Caco-2 (cell line): ENCODE measurements at regions of chr4 and their contacts with region 1.

Region 1: DNA sequence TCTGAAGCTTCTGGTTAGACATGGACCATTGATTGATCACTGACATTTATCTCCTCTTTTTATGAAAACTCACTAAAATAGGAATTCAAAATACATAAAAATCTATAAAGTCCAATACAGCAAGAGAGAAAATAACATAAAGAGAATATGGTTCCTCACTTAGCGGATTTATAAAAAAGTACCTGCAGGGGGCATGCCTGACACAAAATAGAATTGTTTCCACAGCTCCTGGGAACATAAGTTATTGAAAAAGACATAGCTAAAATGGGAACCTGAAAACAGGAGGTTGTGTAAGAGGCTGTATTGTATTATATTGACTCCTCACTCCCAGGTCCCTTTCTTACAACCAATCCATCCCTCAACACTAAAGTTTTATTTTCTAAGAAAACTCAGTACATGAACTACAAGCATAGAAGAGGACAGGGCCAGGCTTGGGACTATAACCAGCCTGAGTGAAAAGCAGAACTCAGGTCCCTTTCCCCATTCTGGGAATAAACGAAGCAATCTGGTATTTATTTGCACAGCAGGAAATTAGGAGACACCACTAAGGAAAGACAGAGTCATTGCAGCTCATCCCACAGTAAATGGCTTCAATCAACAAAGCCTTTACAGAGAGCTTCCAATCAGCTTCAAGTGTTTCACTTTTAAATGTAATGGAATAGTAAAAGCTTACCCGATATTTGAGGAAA is 121.1 kb upstream of the NDST4 start:
- DNase-seq: peak in 1 of 2 experiments; percentile 6
- H3K4me3 ChIP-seq: no peak overlapping the region
- H3K4me3 Mint-ChIP-seq: no peak overlapping the region
- H3K27ac Mint-ChIP-seq: no peak overlapping the region
- H3K4me1 ChIP-seq: no peaks in the 10 kb centered on the region
- H3K4me1 Mint-ChIP-seq: no peaks in the 10 kb centered on the region
- H3K27me3 ChIP-seq: no peaks in the 10 kb centered on the region
- H3K27me3 Mint-ChIP-seq: no peaks in the 10 kb centered on the region
- CTCF ChIP-seq: peak; percentile 28 to 29

Region 2: DNA sequence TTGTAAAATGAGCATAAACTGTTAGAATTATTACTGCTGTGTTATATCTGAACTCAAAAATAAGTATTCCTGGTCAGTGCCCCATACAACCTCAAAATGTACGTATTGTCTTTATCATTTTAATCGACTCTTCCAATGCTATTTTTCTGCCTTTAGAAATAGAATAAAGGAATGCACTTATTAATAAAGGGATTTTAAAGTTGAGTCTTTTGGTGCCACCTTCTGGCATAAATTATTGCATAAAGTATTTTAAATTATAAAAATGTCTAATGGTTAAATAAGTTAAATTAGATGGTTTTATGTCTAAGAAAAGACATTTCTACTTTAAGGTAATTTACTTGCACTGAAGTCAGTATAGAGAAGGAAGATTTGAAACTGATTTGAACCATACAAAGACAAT is 302.8 kb after region 1 on chr4:
- CTCF ChIA-PET with region 1: interaction called, 5 read pairs
- POLR2A ChIA-PET with region 1: no interaction called
- intact Hi-C with region 1: loop called (anchors 1 kb)
- DNase-seq: no peak
- H3K4me3 ChIP-seq: no peak overlapping the region
- H3K4me3 Mint-ChIP-seq: no peak overlapping the region
- H3K27ac Mint-ChIP-seq: no peak overlapping the region
- H3K4me1 ChIP-seq: no peaks in the 10 kb centered on the region
- H3K4me1 Mint-ChIP-seq: no peaks in the 10 kb centered on the region
- H3K27me3 ChIP-seq: no peaks in the 10 kb centered on the region
- H3K27me3 Mint-ChIP-seq: no peaks in the 10 kb centered on the region
- CTCF ChIP-seq: no peak

Region 3: GRCh38 chr4:115790812-115791211 is 556.3 kb after region 1 on chr4:
- CTCF ChIA-PET with region 1: no interaction called
- POLR2A ChIA-PET with region 1: no interaction called
- intact Hi-C with region 1: loop called (anchors 1 kb)
- DNase-seq: no peak
- H3K4me3 ChIP-seq: no peak overlapping the region
- H3K4me3 Mint-ChIP-seq: no peak overlapping the region
- H3K27ac Mint-ChIP-seq: no peak overlapping the region
- H3K4me1 ChIP-seq: no peaks in the 10 kb centered on the region
- H3K4me1 Mint-ChIP-seq: no peaks in the 10 kb centered on the region
- H3K27me3 ChIP-seq: no peaks in the 10 kb centered on the region
- H3K27me3 Mint-ChIP-seq: no peaks in the 10 kb centered on the region
- CTCF ChIP-seq: peak in 1 of 2 experiments; percentile 14

Region 4: DNA sequence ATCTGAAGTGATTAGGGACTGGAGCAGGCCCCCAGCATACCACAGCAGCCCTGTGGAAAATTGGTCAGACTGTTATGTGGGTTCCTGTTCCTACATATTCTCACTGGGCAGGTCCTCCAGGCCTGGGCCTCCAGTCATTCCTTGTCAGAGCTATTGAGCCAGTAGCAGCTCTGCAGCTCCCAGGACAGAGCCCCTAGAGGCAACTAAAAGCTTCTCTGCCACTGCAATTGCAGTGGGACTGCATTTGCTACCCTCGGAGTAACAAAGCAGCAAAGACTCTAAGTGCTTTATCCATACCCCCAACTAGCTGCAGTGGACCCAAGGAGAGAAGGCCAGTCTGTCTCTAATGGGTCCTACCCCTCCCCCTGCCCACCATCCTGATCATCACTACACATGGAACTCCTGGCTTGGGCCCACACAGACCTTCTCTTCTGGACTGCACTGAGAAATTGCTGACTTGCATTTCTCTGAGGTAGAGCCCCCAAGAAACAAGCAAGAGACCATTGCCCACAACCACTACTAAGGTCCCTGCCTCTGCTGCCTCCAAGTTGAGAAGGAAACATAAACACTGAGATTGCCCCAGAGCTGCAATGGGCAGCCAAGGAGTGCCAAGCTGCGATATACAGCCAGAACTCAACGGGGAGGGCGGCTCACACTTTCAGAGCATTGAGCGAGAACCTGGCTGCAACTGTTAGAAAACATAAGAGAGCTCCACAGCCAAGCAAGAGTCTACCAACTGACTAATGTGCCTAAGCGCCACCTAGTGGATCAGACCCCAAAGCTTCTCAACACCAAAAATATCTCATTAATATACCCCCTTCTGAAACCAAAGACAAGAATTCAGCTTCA is 617.6 kb after region 1 on chr4:
- CTCF ChIA-PET with region 1: interaction called, 21 read pairs
- POLR2A ChIA-PET with region 1: no interaction called
- intact Hi-C with region 1: loop called (anchors 1 kb)
- DNase-seq: peak; percentile 47 to 57
- H3K4me3 ChIP-seq: no peak overlapping the region
- H3K4me3 Mint-ChIP-seq: no peak overlapping the region
- H3K27ac Mint-ChIP-seq: no peak overlapping the region
- H3K4me1 ChIP-seq: no peaks in the 10 kb centered on the region
- H3K4me1 Mint-ChIP-seq: no peaks in the 10 kb centered on the region
- H3K27me3 ChIP-seq: no peaks in the 10 kb centered on the region
- H3K27me3 Mint-ChIP-seq: peaks cover 6% of the 10 kb centered on the region
- CTCF ChIP-seq: peak; percentile 47 to 75